ENCODE measurements at regions of chr5 and their contacts with region 1.

Region 1: GRCh38 chr5:152424501-152424900 is 19.4 kb upstream of the NMUR2 start:
- DNase-seq: no peak

Region 2: GRCh38 chr5:154276973-154277331 is 1852.5 kb after region 1 on chr5:
- intact Hi-C with region 1: loop called in 1 of 2 experiments (anchors 5 kb)
- DNase-seq: peak; percentile 84

Measured in posterior vena cava (tissue), 2 donors.